ENCODE measurements at regions of chr16 and their contacts with region 1.

Region 1: GRCh38 chr16:30429678-30430427 is at the start of gene DCTPP1:
- DNase-seq: peak; percentile 97
- ATAC-seq: peak; percentile 96
- H3K4me3 Mint-ChIP-seq: no peak within 1 kb of the TSS
- H3K27ac Mint-ChIP-seq: no peak within 1 kb of the TSS
- H3K4me1 Mint-ChIP-seq: peaks cover 31% of the 10 kb centered on the region
- H3K27me3 Mint-ChIP-seq: no peaks in the 10 kb centered on the region
- total RNA-seq, gene DCTPP1: 89.3 to 102 TPM

Region 2: GRCh38 chr16:30370444-30371247 is 59.2 kb before region 1 on chr16 and contains the start of gene TBC1D10B:
- CTCF ChIA-PET with region 1: interaction called, 6 read pairs
- POLR2A ChIA-PET with region 1: no interaction called
- intact Hi-C with region 1: loop called in 1 of 2 experiments (anchors 1 kb)
- DNase-seq: peak; percentile 99
- ATAC-seq: peak; percentile 88
- H3K4me3 Mint-ChIP-seq: peak within 1 kb of the TSS; percentile 89
- H3K27ac Mint-ChIP-seq: peak within 1 kb of the TSS; percentile 97
- H3K4me1 Mint-ChIP-seq: peaks cover 40% of the 10 kb centered on the region
- H3K27me3 Mint-ChIP-seq: no peaks in the 10 kb centered on the region
- total RNA-seq, gene TBC1D10B: 38.1 to 43.4 TPM

Region 3: GRCh38 chr16:30445408-30446202 is 15.8 kb after region 1 on chr16 and contains the start of gene SEPHS2:
- CTCF ChIA-PET with region 1: interaction called, 21 read pairs
- POLR2A ChIA-PET with region 1: interaction called, 3 read pairs
- intact Hi-C with region 1: loop called (anchors 1 kb)
- DNase-seq: peak; percentile 98
- ATAC-seq: peak; percentile 98
- H3K4me3 Mint-ChIP-seq: peak within 1 kb of the TSS; percentile 86
- H3K27ac Mint-ChIP-seq: peak within 1 kb of the TSS; percentile 93
- H3K4me1 Mint-ChIP-seq: peaks cover 35% of the 10 kb centered on the region
- H3K27me3 Mint-ChIP-seq: no peaks in the 10 kb centered on the region
- total RNA-seq, gene SEPHS2: 37.8 to 56.0 TPM

Region 4: GRCh38 chr16:30491744-30492308 is 62.0 kb after region 1 on chr16:
- CTCF ChIA-PET with region 1: interaction called, 13 read pairs
- POLR2A ChIA-PET with region 1: interaction called, 4 read pairs
- intact Hi-C with region 1: loop called in 1 of 2 experiments (anchors 5 kb)
- DNase-seq: peak; percentile 24
- ATAC-seq: peak; percentile 65
- H3K4me3 Mint-ChIP-seq: no peak overlapping the region
- H3K27ac Mint-ChIP-seq: peak overlapping the region; percentile 66
- H3K4me1 Mint-ChIP-seq: peaks cover 25% of the 10 kb centered on the region
- H3K27me3 Mint-ChIP-seq: no peaks in the 10 kb centered on the region

Region 5: GRCh38 chr16:30557957-30558788 is 128.3 kb after region 1 on chr16 and contains the start of gene ZNF764:
- CTCF ChIA-PET with region 1: interaction called, 14 read pairs
- POLR2A ChIA-PET with region 1: interaction called, 4 read pairs
- intact Hi-C with region 1: loop called in 1 of 2 experiments (anchors 1 kb)
- DNase-seq: peak; percentile 99
- ATAC-seq: peak; percentile 96
- H3K4me3 Mint-ChIP-seq: peak within 1 kb of the TSS; percentile 85
- H3K27ac Mint-ChIP-seq: peak within 1 kb of the TSS; percentile 94
- H3K4me1 Mint-ChIP-seq: peaks cover 44% of the 10 kb centered on the region
- H3K27me3 Mint-ChIP-seq: no peaks in the 10 kb centered on the region
- total RNA-seq, gene ZNF764: 8.0 to 11.2 TPM

Region 6: GRCh38 chr16:30602616-30603277 is 172.9 kb after region 1 on chr16:
- CTCF ChIA-PET with region 1: interaction called, 32 read pairs
- POLR2A ChIA-PET with region 1: no interaction called
- intact Hi-C with region 1: loop called (anchors 1 kb)
- DNase-seq: no peak
- ATAC-seq: no peak
- H3K4me3 Mint-ChIP-seq: no peak overlapping the region
- H3K27ac Mint-ChIP-seq: no peak overlapping the region
- H3K4me1 Mint-ChIP-seq: peaks cover 7% of the 10 kb centered on the region
- H3K27me3 Mint-ChIP-seq: no peaks in the 10 kb centered on the region

Region 7: GRCh38 chr16:30628627-30629540 is 199.0 kb after region 1 on chr16:
- CTCF ChIA-PET with region 1: interaction called, 7 read pairs
- POLR2A ChIA-PET with region 1: interaction called, 4 read pairs
- intact Hi-C with region 1: loop called in 1 of 2 experiments (anchors 1 kb)
- DNase-seq: peak; percentile 95
- ATAC-seq: peak; percentile 93
- H3K4me3 Mint-ChIP-seq: peak overlapping the region; percentile 58
- H3K27ac Mint-ChIP-seq: peak overlapping the region; percentile 82
- H3K4me1 Mint-ChIP-seq: peaks cover 14% of the 10 kb centered on the region
- H3K27me3 Mint-ChIP-seq: no peaks in the 10 kb centered on the region

Measured in activated CD4-positive, alpha-beta T cell treated with anti-CD3 and anti-CD28 coated beads for 36 hours (primary cell).